ENCODE measurements at regions of chr16 and their contacts with region 1.

Region 1: DNA sequence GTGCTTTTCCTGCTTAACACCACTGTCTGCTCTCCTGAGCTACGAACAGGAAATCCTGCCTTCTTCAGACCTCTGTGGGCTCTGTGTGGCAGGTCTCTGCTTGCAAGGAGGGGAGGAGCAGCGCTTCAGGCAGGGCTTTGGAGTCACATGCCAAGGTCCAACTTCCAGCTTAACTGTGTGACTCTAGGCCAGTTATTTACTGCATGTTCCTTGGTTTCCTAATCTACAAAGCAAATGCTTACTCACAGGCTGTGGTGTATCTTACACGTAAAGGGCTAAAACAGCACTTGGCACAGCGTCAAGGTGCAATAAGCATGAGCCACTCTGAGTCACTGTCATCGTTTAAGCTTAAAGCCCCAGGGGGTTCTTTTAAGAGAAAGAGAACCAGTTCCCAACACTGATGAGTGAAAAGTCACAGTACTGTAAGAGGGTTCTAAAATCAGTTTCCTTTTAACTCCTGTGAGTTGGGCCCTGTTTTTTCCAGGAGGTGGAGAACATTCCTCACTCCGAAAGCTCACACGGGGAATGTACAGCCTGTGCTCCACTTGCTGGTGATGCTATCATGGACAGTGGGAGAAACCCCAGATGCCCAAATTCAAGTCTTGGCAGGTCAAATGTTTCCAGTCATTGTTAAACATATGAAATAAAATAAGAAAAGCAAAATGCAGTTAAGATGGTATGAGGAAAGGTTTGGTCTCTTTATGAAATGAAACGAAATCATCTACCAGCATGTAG is 54.1 kb upstream of the BCAR1 start:
- DNase-seq: peak in 4 of 5 donors; percentile 62 to 82 (median 68)
- ATAC-seq: peak; percentile 91 to 92 (median 92)
- H3K4me3 ChIP-seq: peak overlapping the region in 2 of 12 donors; percentile 2 to 7
- H3K27ac ChIP-seq: peak overlapping the region; percentile 75 to 94 (median 84)
- H3K4me1 ChIP-seq: peaks cover 3 to 34% (median 24%) of the 10 kb centered on the region in 12 donors
- H3K27me3 ChIP-seq: peaks cover 0 to 2% (median 0%) of the 10 kb centered on the region in 9 donors
- CTCF ChIP-seq: no peak
- POLR2A ChIP-seq: no peak

Region 2: GRCh38 chr16:75244844-75245758 is 60.4 kb before region 1 on chr16:
- intact Hi-C with region 1: loop called in 4 of 10 experiments (anchors 2 to 10 kb)
- DNase-seq: peak; percentile 87 to 96 (median 88)
- ATAC-seq: peak; percentile 81 to 83 (median 83)
- H3K4me3 ChIP-seq: peak overlapping the region in 6 of 12 donors; percentile 6 to 24 (median 16)
- H3K27ac ChIP-seq: peak overlapping the region; percentile 60 to 99 (median 94)
- H3K4me1 ChIP-seq: peaks cover 34 to 100% (median 79%) of the 10 kb centered on the region in 12 donors
- H3K27me3 ChIP-seq: peaks cover 0 to 18% (median 0%) of the 10 kb centered on the region in 9 donors
- CTCF ChIP-seq: no peak
- POLR2A ChIP-seq: peak in 1 of 2 donors; percentile 33

Region 3: GRCh38 chr16:75265845-75266701 is 39.5 kb before region 1 on chr16:
- intact Hi-C with region 1: loop called in 6 of 10 experiments (anchors 2 to 5 kb)
- DNase-seq: peak; percentile 73 to 87 (median 78)
- ATAC-seq: peak; percentile 14 to 58 (median 44)
- H3K4me3 ChIP-seq: peak overlapping the region; percentile 70 to 100 (median 94)
- H3K27ac ChIP-seq: peak overlapping the region; percentile 84 to 99 (median 96)
- H3K4me1 ChIP-seq: peaks cover 27 to 66% (median 52%) of the 10 kb centered on the region in 12 donors
- H3K27me3 ChIP-seq: peaks cover 0 to 50% (median 0%) of the 10 kb centered on the region in 9 donors
- CTCF ChIP-seq: no peak
- POLR2A ChIP-seq: peak in 1 of 2 donors; percentile 65

Region 4: GRCh38 chr16:75342308-75342829 is 36.8 kb after region 1 on chr16:
- intact Hi-C with region 1: loop called in 1 of 10 experiments (anchors 5 kb)
- DNase-seq: no peak
- ATAC-seq: peak in 3 of 4 donors; percentile 67 to 79 (median 69)
- H3K4me3 ChIP-seq: no peak overlapping the region
- H3K27ac ChIP-seq: peak overlapping the region in 7 of 12 donors; percentile 5 to 61 (median 31)
- H3K4me1 ChIP-seq: peaks cover 0 to 35% (median 21%) of the 10 kb centered on the region in 12 donors
- H3K27me3 ChIP-seq: peaks cover 0 to 47% (median 0%) of the 10 kb centered on the region in 9 donors
- CTCF ChIP-seq: no peak
- POLR2A ChIP-seq: no peak

Region 5: DNA sequence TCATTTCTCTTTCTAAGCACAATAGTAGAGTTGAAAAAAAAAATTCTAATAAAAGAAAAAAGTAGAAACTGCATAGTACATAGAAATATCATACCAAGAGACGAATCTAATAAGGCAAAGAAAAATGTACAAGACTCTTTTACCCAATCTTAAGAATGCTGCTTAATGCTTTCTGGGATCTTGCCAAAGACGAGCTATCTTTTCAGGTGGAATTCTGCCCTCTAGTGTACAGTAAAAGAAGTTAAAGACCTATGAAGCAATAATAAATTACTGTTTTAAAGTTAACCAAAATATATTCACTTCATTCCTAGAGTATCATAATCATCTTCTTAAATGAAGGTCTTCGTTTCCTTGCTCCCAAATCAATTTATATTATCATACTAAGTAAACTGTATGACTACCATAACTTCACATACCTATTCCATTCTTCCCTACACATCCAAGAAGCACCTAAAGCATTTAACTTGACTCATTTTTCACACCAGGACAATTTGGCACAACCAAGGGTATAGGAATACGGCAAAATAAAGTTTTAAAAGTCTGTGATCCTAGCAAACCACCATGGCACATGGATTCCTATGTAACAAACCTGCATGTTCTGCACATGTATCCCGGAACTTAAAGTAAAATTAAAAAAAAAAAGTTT is 80.1 kb after region 1 on chr16:
- intact Hi-C with region 1: loop called in 2 of 10 experiments (anchors 2 to 5 kb)
- DNase-seq: peak in 1 of 5 donors; percentile 29
- ATAC-seq: no peak
- H3K4me3 ChIP-seq: no peak overlapping the region
- H3K27ac ChIP-seq: no peak overlapping the region
- H3K4me1 ChIP-seq: peaks cover 0 to 44% (median 18%) of the 10 kb centered on the region in 12 donors
- H3K27me3 ChIP-seq: peaks cover 0 to 18% (median 0%) of the 10 kb centered on the region in 9 donors
- CTCF ChIP-seq: peak; percentile 63 to 85 (median 74)
- POLR2A ChIP-seq: no peak

Measured in heart left ventricle (tissue), 16 donors.